ENCODE measurements at regions of chr2 and their contacts with region 1.

Region 1: DNA sequence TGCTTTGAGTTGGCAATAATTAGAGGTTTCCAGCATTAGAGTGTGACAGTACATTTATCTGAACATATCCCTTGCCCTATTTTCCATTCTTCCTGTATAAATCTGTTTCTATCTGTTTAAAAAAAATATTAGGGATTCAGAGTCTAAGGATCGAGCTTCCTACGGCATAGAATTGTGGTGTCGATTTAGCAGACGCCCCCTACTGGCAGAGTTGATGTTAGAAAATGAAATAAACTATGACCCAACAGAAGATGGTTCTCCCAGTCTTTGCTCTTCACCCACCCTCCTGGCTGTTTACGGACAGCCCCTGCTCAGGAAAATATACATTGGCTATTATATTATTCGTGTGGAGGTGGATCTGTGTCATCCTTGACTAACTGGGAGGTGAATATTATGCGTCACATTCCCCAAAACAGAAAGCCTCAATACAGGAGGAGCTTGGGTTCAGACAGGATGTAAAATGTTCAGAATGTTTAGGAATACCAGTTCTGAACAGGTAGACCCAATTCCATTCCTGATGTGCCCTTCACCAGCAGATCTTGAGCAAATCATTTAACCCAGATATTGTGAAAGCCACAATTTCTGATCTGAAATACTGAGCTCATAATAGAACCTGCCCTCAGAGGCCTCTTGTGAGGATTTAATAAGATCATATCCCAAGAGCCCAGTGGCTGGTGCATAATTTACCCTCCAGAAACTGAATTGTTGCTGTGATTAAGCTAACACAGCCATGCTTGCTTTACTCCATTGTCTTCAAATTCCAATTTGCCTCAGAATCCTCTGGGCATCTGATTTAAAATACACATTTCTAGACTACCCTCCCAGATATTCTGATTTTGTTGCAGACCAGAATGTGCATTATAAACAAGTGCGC is 10.8 kb upstream of the ERMN start:
- DNase-seq: peak in 8 of 9 experiments; percentile 4 to 73 (median 54)
- ATAC-seq: peak; percentile 35
- H3K4me3 ChIP-seq: peak overlapping the region in 1 of 2 experiments; percentile 9
- H3K4me3 Mint-ChIP-seq: peak overlapping the region; percentile 17
- H3K27ac ChIP-seq: no peak overlapping the region
- H3K27ac Mint-ChIP-seq: peak overlapping the region; percentile 20
- H3K4me1 ChIP-seq: peaks cover 32% of the 10 kb centered on the region
- H3K4me1 Mint-ChIP-seq: peaks cover 74% of the 10 kb centered on the region
- H3K27me3 ChIP-seq: no peaks in the 10 kb centered on the region
- H3K27me3 Mint-ChIP-seq: no peaks in the 10 kb centered on the region
- CTCF ChIP-seq: peak; percentile 71

Region 2: GRCh38 chr2:157349949-157350515 is 13.7 kb after region 1 on chr2:
- CTCF ChIA-PET with region 1: interaction called, 35 read pairs
- POLR2A ChIA-PET with region 1: no interaction called
- intact Hi-C with region 1: no loop called
- DNase-seq: no peak
- ATAC-seq: no peak
- H3K4me3 ChIP-seq: no peak overlapping the region
- H3K4me3 Mint-ChIP-seq: no peak overlapping the region
- H3K27ac ChIP-seq: no peak overlapping the region
- H3K27ac Mint-ChIP-seq: no peak overlapping the region
- H3K4me1 ChIP-seq: peaks cover 13% of the 10 kb centered on the region
- H3K4me1 Mint-ChIP-seq: peaks cover 64% of the 10 kb centered on the region
- H3K27me3 ChIP-seq: no peaks in the 10 kb centered on the region
- H3K27me3 Mint-ChIP-seq: no peaks in the 10 kb centered on the region
- CTCF ChIP-seq: no peak

Region 3: GRCh38 chr2:157377861-157378260 is 41.5 kb after region 1 on chr2:
- CTCF ChIA-PET with region 1: interaction called, 7 read pairs
- POLR2A ChIA-PET with region 1: no interaction called
- intact Hi-C with region 1: loop called (anchors 5 kb)
- DNase-seq: no peak
- ATAC-seq: no peak
- H3K4me3 ChIP-seq: no peak overlapping the region
- H3K4me3 Mint-ChIP-seq: peak overlapping the region; percentile 26
- H3K27ac ChIP-seq: no peak overlapping the region
- H3K27ac Mint-ChIP-seq: no peak overlapping the region
- H3K4me1 ChIP-seq: peaks cover 25% of the 10 kb centered on the region
- H3K4me1 Mint-ChIP-seq: peaks cover 40% of the 10 kb centered on the region
- H3K27me3 ChIP-seq: no peaks in the 10 kb centered on the region
- H3K27me3 Mint-ChIP-seq: no peaks in the 10 kb centered on the region
- CTCF ChIP-seq: no peak

Region 4: GRCh38 chr2:157413326-157414035 is 77.1 kb after region 1 on chr2:
- CTCF ChIA-PET with region 1: interaction called, 21 read pairs
- POLR2A ChIA-PET with region 1: interaction called, 7 read pairs
- intact Hi-C with region 1: no loop called
- DNase-seq: peak in 7 of 9 experiments; percentile 41 to 91 (median 64)
- ATAC-seq: peak; percentile 76
- H3K4me3 ChIP-seq: peak overlapping the region in 1 of 2 experiments; percentile 2
- H3K4me3 Mint-ChIP-seq: peak overlapping the region; percentile 44
- H3K27ac ChIP-seq: peak overlapping the region; percentile 49 to 80
- H3K27ac Mint-ChIP-seq: peak overlapping the region; percentile 91
- H3K4me1 ChIP-seq: peaks cover 95% of the 10 kb centered on the region
- H3K4me1 Mint-ChIP-seq: peaks cover 89% of the 10 kb centered on the region
- H3K27me3 ChIP-seq: no peaks in the 10 kb centered on the region
- H3K27me3 Mint-ChIP-seq: no peaks in the 10 kb centered on the region
- CTCF ChIP-seq: no peak

Region 5: DNA sequence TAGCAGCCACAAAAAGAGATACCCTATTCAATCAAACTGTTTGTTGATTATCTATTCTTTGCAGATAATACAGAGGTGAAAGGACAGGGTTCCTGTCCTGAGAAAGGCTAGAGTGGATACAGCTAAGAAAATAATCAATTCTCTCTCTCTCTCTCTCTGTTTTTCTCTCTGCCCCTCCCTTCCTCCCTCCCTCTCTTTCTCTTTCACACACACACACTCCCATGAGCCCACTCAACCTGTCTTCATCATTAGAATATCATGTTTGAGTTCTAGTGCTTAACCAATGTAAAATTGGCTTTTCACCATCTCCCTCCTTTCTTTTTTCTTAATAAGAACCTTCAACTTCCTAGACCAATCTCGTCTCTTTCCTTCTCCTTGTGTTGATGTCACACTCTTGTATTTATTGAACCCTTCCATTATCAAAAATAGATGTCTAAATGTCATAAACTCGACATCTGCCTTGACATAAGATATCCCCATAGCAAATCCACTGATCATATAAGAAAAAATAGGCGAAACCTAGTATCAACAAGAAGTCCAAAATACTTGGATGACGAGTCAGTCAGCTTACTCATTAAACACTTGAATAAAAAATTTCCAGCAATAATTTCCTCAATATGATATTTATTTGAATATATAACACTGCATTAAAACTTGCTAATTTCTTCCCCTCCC is 150.4 kb after region 1 on chr2:
- CTCF ChIA-PET with region 1: interaction called, 11 read pairs
- POLR2A ChIA-PET with region 1: interaction called, 3 read pairs
- intact Hi-C with region 1: no loop called
- DNase-seq: no peak
- ATAC-seq: no peak
- H3K4me3 ChIP-seq: no peak overlapping the region
- H3K4me3 Mint-ChIP-seq: no peak overlapping the region
- H3K27ac ChIP-seq: no peak overlapping the region
- H3K27ac Mint-ChIP-seq: no peak overlapping the region
- H3K4me1 ChIP-seq: no peaks in the 10 kb centered on the region
- H3K4me1 Mint-ChIP-seq: peaks cover 27% of the 10 kb centered on the region
- H3K27me3 ChIP-seq: no peaks in the 10 kb centered on the region
- H3K27me3 Mint-ChIP-seq: no peaks in the 10 kb centered on the region
- CTCF ChIP-seq: no peak